ENCODE measurements at regions of chr16 and their contacts with region 1.

Region 1: DNA sequence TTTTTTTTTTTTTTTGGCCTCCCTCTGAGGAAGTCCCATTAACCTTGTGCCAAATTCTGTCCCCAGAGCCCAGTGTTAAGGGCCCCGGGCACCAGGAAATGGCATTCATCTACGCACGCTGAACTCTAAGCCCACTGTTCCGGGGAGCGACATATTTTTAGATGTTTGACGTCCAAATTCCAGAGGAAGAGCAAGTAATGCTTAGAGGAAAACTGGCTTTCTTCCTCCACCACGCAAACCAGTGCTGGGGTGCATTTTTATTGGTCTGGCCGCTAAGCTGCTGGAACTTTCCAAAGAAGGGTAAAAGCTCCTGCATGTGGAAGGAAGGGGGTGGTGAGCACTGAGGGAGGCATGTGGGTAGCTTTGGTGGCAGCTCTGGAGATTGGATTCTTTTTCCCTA is 8.3 kb downstream of the WFDC1 start:
- DNase-seq: no peak

Region 2: DNA sequence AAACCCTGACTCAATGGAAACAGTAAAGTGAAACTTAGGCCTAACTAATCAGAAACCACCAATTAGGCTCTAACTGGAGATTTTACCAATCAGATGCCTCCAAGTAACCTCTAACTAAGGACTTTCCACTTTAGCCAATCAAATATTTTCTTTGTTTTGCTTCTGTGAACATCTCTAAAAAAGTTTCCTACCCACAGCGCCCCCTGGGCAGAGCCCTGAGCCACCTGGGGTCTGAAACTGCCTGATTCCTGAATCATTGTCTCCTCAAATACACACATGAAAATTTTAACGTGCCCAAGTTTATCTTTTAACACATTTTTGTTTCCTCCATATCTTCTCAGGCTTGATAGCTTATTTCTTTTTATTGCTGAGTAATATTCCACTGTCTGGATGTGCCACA is 93.0 kb before region 1 on chr16:
- intact Hi-C with region 1: no loop called
- DNase-seq: no peak

Region 3: GRCh38 chr16:84286578-84287220 is 16.3 kb before region 1 on chr16:
- intact Hi-C with region 1: loop called (anchors 2 kb)
- DNase-seq: no peak

Region 4: DNA sequence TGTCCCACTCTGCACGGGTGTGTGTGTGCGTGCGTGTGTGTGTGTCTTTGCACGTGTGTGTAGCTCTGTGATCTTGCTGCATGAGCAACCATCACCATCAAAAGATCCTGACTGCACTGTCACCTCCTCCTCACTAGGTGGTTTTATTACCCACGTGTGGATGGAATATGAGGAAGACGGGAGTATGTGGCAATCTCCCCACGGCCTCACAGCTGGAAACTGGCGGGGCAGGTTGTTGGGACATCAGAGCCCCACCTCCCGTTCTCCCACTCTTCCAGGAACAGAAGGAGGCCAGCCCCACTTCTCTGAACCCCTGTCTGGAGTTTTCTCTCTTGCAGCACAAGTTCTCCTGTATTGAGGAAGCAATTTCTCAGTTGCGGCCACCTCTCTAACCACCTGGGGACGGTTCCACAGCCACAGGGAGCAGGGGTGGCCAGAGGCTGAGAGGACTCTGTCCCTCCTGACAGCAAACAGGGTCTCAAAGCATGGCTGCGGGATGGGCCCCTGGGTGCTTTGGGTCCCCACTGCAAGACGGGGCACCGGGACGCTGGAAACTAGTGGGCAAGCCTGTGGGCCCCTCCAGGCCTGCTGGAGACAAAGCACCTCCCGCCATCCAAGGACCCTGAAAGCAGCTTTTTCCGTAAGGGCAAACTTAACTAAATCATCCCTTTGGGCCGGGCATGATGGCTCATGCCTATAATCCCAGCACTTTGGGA is 37.5 kb after region 1 on chr16:
- intact Hi-C with region 1: no loop called
- DNase-seq: no peak